Cardiac septum (tissue), 1 donor: ENCODE measurements at regions of chr5 and their contacts with region 1.

Region 1: GRCh38 chr5:64939522-64940510 is 171.1 kb downstream of the CWC27 start:
- DNase-seq: no peak

Region 2: DNA sequence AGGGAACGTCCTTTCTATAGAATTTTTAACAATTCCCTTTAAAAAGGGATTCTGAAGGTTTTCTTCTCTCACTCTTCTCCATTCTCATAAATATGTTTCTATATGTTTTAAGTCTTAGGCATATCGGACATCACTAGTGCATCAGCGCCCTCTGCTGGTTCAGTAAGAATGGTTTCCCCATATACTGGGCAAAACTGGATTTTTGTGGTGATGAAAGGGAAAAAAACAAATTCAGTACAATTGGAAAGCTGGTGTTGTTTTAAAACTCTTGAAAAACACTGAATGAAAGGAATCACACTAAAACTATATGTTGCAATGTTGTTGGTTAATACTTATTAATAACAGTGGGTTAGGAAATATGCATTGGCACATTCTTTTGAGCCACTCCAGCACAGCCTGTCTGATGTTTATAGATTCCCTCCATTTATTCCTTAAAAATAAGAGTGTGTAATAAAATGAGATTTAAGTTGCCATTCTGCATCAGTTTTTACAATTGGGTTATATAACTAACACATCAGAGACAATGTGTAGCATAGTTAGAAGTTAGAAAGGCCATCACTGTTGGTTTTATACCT is 155.3 kb before region 1 on chr5:
- intact Hi-C with region 1: no loop called
- DNase-seq: no peak

Region 3: DNA sequence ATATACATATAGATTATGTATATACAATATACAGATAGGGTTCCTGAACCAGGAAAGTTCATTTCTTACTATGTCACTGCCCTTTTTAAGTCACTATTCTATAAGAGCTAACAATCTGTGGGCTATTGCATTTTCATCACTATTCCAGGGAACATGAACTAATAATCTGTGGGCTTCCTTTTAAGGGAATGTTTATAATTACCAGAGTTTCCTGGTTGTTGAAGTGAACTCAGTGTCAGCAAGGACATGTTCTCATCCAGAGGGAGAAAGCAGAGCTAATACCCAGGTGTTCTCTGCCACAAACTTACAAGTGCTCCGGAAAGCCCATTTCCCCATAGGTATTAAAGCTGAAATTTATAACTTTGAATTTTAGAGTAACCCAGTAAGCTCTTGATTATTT is 101.4 kb before region 1 on chr5:
- intact Hi-C with region 1: loop called (anchors 10 kb)
- DNase-seq: no peak